ENCODE measurements at regions of chr6 and their contacts with region 1.

Region 1: DNA sequence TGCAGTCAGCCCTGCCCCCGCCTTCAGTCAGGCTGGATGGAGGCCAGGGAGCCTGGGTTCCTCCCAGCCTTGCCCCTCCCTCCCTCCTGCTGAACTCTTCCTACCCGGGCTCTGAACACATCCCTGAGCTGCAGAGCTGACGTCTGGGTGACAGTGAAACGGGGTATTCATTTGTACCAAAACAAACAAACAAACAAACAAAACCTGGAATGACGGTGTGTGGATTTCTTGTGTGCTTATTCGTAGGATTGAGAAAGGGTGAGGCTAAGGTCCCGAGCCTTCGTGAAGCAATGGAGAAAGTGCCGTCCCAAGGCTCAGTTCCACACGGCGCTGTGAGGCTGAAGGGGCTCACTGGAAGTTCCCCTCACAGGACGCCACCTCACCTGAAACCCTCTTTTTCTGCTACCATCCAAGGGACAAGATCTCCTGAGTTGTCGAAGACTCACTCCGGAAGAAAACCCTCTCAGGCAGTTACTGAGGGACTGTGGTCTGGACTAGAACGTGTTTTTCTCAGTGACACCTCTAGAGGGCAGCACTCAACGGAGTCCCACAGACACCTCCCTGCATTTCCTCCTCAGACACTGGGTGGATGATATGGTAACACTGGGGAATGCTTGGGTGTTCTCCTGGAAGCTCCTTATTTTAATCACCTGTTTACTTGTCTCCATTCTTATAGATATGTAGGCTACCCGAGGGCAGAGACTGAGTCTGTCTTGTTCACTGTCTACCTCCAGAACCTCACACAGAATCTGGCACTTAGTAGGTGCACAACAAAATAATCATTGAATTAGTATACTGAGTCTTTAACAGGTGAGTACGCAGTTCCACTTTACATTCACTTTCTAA is 27.3 kb downstream of the GSTA3 start:
- DNase-seq: peak; percentile 48
- ATAC-seq: peak; percentile 100

Region 2: DNA sequence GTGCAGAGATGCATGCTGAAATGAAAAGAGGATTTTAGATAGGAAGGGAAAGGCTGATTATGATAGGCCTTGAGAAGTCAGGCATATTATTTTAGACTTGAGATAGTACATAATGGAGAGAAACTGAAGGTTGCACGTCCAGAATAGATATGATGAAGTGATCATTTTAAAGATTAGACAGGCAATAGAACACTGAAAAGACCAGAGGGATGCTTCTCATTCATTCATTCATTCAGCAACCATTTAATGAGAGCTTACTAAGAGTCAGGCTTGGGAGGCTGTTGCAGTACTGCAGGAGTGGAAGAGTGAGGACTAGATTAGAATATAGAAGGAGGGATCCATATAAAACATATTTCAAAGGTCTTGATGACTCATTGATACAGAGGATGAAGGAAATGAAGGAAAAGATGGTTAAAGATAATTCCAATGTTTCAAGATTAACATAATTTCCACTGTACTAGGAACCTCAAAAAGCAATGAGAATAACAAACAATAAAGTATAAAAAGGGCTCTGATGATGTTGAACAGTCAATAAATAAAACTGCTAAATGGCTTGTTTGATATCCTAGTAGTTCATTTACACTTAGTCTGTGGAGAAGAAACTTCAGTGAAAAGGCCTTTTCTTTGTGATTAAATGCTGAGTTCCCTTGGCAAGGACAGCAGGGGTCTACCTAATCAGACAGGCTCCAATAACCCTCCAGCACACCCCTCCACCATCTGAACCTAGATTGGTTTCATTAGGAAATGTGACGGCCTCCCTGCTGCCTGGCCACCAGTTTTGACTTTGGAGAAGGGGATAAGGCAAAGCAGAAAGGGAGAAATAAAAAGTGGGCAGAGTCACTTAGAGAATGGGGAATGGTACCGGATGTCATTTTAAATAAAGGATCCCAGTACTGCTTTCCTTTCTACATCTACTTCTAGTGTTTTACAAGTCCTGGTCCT is 177.7 kb after region 1 on chr6:
- intact Hi-C with region 1: loop called (anchors 10 kb)
- DNase-seq: no peak
- ATAC-seq: no peak